Activated CD4-positive, alpha-beta memory T cell treated with anti-CD3 and anti-CD28 coated beads, Interleukin-2, amount 10 ng/mL, durations not matched to agents 7 days and 5 days (primary cell): ENCODE measurements at regions of chr11 and their contacts with region 1.

Region 1: DNA sequence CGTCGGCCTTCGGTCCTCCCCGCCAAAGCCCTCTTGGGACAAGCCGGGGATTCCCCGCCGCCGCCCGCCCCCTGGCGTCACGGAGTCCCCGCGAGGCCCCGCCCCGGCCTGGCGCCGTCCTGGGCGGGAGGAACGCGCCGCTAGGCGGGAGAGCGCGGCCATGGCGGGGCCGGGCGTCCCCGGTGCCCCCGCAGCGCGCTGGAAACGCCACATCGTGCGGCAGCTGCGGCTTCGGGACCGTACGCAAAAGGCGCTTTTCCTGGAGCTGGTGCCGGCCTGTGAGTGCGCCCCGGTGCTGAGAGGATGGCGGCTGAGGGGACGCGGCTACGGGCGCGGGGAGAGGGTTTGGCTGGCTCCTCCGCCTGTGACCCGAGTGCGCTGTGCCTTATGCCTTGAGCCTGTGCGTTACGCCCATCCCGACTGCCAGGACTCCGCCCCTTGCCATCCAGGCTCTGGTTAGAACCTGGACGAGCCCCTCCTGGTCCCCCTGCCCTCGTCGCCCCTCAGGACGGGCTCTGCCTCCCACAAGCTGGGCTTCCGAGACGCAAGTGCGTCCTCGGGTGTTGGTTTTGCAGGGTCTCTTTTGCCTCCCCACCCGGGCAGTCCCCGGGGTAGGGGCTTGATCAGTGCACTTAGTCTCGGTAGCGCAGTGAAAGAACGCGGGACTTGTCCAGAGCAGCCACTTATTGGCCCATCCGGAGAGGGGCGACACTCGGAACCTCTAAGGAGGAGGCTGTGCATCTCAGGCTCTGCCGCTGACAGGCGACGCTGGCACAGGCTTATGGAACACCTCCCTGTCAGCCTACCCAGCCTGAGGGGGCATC is at the start of gene ATG16L2:
- DNase-seq: peak; percentile 91
- H3K4me3 Mint-ChIP-seq: peak within 1 kb of the TSS; percentile 99
- H3K27ac Mint-ChIP-seq: peak within 1 kb of the TSS; percentile 99
- H3K4me1 Mint-ChIP-seq: peaks cover 52% of the 10 kb centered on the region
- H3K27me3 Mint-ChIP-seq: no peaks in the 10 kb centered on the region
- total RNA-seq, gene ATG16L2: 135 to 137 TPM

Region 2: GRCh38 chr11:72703267-72704008 is 111.1 kb before region 1 on chr11:
- CTCF ChIA-PET with region 1: no interaction called
- POLR2A ChIA-PET with region 1: no interaction called
- DNase-seq: no peak
- H3K4me3 Mint-ChIP-seq: no peak overlapping the region
- H3K27ac Mint-ChIP-seq: no peak overlapping the region
- H3K4me1 Mint-ChIP-seq: no peaks in the 10 kb centered on the region
- H3K27me3 Mint-ChIP-seq: no peaks in the 10 kb centered on the region

Region 3: DNA sequence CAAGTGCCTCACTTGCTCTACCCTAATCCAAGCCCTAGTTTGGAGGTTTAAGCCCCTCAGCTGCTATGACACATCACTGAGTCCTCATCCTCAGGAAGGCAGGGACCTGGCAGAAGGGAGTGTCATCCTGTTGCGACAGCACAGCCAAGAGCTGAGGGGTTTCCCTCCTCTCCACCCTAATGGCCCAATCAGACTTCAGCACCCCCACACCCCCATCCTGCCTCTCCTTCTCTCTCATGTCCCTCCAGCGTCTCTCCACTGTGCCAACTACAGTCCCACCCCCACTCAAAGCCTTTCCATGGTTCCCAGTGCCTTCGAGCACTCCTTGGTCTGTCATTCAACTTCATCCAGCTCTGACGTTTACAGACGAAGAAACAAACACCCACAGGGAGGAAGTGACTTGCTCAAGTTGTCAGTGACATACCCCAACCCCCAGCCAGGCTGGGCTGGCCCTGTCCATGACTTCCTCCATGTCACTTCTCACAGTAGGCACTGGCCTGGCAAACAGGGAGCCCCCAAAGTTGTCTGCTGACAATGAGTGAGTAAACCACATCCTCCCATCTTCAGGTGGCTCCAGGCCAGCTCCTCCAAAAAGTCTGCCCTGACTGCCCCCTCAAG is 77.9 kb before region 1 on chr11:
- CTCF ChIA-PET with region 1: interaction called, 6 read pairs
- POLR2A ChIA-PET with region 1: interaction called, 17 read pairs
- DNase-seq: peak; percentile 81
- H3K4me3 Mint-ChIP-seq: peak overlapping the region; percentile 41
- H3K27ac Mint-ChIP-seq: peak overlapping the region; percentile 97
- H3K4me1 Mint-ChIP-seq: peaks cover 57% of the 10 kb centered on the region
- H3K27me3 Mint-ChIP-seq: no peaks in the 10 kb centered on the region

Region 4: GRCh38 chr11:72781313-72782050 is 33.0 kb before region 1 on chr11:
- CTCF ChIA-PET with region 1: interaction called, 12 read pairs
- POLR2A ChIA-PET with region 1: interaction called, 8 read pairs
- DNase-seq: peak; percentile 42
- H3K4me3 Mint-ChIP-seq: peak overlapping the region; percentile 72
- H3K27ac Mint-ChIP-seq: no peak overlapping the region
- H3K4me1 Mint-ChIP-seq: peaks cover 15% of the 10 kb centered on the region
- H3K27me3 Mint-ChIP-seq: peaks cover 11% of the 10 kb centered on the region

Region 5: GRCh38 chr11:72793425-72794367 is 20.8 kb before region 1 on chr11 and contains the start of gene STARD10:
- CTCF ChIA-PET with region 1: interaction called, 44 read pairs
- POLR2A ChIA-PET with region 1: interaction called, 54 read pairs
- DNase-seq: peak; percentile 95
- H3K4me3 Mint-ChIP-seq: peak within 1 kb of the TSS; percentile 93
- H3K27ac Mint-ChIP-seq: peak within 1 kb of the TSS; percentile 96
- H3K4me1 Mint-ChIP-seq: peaks cover 23% of the 10 kb centered on the region
- H3K27me3 Mint-ChIP-seq: no peaks in the 10 kb centered on the region
- total RNA-seq, gene STARD10: 11.3 to 11.6 TPM

Region 6: GRCh38 chr11:72831513-72832300 is 17.2 kb after region 1 on chr11:
- CTCF ChIA-PET with region 1: interaction called, 7 read pairs
- POLR2A ChIA-PET with region 1: interaction called, 58 read pairs
- DNase-seq: peak; percentile 57
- H3K4me3 Mint-ChIP-seq: no peak overlapping the region
- H3K27ac Mint-ChIP-seq: peak overlapping the region; percentile 36
- H3K4me1 Mint-ChIP-seq: peaks cover 36% of the 10 kb centered on the region
- H3K27me3 Mint-ChIP-seq: no peaks in the 10 kb centered on the region

Region 7: DNA sequence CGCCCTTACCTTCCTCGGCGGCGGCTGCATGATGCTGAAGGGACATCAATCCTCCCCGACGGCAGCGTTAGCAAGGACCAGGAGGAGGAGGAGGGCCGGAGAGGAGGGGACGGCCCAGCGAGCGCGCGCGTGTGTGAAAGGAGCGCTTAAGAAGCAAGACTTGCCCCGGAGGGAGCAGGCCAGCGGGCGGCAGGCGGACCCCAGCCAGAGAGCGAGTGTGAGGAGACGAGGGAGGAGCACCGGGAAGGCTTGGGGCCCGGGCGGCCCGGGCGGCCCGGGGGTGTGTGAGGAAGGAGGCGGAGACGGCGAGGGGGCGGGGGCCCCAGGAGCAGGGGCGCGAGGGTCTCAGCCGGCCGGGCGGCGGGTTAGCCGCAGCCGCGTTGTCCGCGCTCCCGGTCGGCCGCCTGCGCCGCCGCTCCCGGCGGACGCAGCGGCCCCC is 327.4 kb after region 1 on chr11:
- CTCF ChIA-PET with region 1: interaction called, 8 read pairs
- POLR2A ChIA-PET with region 1: interaction called, 28 read pairs
- DNase-seq: peak; percentile 66
- H3K4me3 Mint-ChIP-seq: peak overlapping the region; percentile 97
- H3K27ac Mint-ChIP-seq: peak overlapping the region; percentile 86
- H3K4me1 Mint-ChIP-seq: peaks cover 46% of the 10 kb centered on the region
- H3K27me3 Mint-ChIP-seq: no peaks in the 10 kb centered on the region